PC-3 (cell line): ENCODE measurements at regions of chr11 and their contacts with region 1.

Region 1: GRCh38 chr11:134244655-134245054 is 8.5 kb downstream of the THYN1 start:
- DNase-seq: peak; percentile 48
- ATAC-seq: peak; percentile 95
- H3K4me3 ChIP-seq: no peak overlapping the region
- H3K27ac ChIP-seq: no peak overlapping the region
- H3K4me1 ChIP-seq: no peaks in the 10 kb centered on the region
- H3K27me3 ChIP-seq: no peaks in the 10 kb centered on the region
- CTCF ChIP-seq: peak; percentile 73

Region 2: GRCh38 chr11:134207538-134208239 is 37.0 kb before region 1 on chr11:
- CTCF ChIA-PET with region 1: no interaction called
- POLR2A ChIA-PET with region 1: no interaction called
- intact Hi-C with region 1: loop called (anchors 2 kb)
- DNase-seq: peak; percentile 46
- ATAC-seq: peak; percentile 35
- H3K4me3 ChIP-seq: no peak overlapping the region
- H3K27ac ChIP-seq: no peak overlapping the region
- H3K4me1 ChIP-seq: no peaks in the 10 kb centered on the region
- H3K27me3 ChIP-seq: no peaks in the 10 kb centered on the region
- CTCF ChIP-seq: peak; percentile 75